Colonic mucosa (tissue), 4 donors: ENCODE measurements at regions of chr9 and their contacts with region 1.

Region 1: DNA sequence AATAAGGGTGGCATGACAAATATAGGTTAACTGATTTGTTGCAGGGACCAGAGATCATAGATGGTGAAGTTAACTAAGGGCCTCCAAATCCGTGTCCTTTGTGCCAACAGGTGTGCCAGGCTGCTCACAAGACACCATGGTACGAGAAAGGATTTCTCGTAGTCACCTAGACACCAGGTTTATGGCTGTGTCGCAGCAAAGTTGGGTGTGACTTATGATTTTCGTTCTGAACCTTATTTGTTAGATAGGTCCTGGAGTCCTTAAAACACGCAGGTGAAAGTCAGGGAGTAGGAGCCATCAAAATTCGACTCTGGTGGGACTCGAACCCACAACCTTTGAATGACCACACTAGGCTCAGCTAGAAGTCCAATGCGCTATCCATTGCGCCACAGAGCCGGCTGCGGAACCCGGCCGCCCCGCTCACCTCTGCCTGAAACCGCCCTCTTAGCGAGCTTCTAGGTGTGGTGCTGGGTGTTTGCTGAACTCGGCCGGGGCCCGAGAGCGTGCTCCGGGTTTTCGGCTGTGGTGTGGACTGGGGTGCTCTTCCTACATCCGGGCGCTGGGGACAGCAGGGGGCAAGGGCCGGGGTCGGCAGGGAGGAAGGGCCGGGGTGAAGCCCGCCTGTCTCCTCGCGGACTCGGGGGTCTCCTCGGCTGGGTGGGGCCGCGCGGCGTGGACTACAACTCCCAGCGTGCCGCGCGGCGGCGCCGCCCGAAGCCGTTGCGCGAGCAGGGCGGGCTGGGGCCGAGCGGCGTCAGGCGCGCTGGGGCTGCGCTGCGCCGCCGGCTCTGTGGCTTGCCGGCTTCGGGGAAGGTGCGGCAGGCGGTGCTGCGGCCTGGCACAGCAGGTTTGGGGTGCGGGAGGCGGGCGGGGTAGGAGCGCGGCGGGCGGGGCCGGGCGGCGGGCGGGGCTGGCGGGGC is at the start of gene SLC27A4:
- DNase-seq: peak; percentile 86
- H3K4me3 ChIP-seq: peak within 1 kb of the TSS; percentile 98
- H3K27ac ChIP-seq: peak within 1 kb of the TSS; percentile 87
- H3K4me1 ChIP-seq: no peaks in the 10 kb centered on the region
- H3K27me3 ChIP-seq: no peaks in the 10 kb centered on the region
- CTCF ChIP-seq: no peak
- total RNA-seq, gene SLC27A4: 26.8 to 68.3 TPM

Region 2: DNA sequence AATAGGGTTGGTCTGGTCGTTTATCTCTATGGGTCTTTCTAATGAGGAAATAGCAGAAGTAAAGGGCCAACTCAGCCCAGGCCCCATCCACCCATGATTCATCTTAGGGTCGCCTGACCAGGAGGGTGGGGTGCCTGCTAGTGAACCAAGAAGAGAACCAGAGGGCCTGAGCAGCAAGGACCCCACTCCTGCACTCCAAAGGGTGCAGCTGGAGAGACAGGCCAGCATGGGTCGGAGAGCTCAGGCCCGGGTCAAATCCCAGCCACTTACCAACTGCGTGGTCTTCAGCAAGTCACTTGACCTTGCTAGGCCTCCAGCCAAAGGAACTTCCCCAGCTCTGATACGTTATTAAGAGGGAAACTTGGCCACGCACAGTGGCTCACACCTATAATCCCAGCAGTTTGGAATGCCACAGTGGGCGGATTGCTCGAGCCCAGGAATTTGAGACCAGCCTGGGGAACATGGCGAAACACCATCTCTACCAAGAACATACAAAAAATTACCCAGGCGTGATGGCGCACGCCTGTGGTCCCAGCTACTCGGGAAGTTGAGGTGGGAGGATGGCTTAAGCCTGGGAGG is 175.6 kb before region 1 on chr9:
- intact Hi-C with region 1: no loop called
- DNase-seq: no peak
- H3K4me3 ChIP-seq: no peak overlapping the region
- H3K27ac ChIP-seq: no peak overlapping the region
- H3K4me1 ChIP-seq: no peaks in the 10 kb centered on the region
- H3K27me3 ChIP-seq: no peaks in the 10 kb centered on the region
- CTCF ChIP-seq: no peak

Region 3: GRCh38 chr9:128182893-128183588 is 157.0 kb before region 1 on chr9:
- intact Hi-C with region 1: loop called (anchors 10 kb)
- DNase-seq: no peak
- H3K4me3 ChIP-seq: no peak overlapping the region
- H3K27ac ChIP-seq: no peak overlapping the region
- H3K4me1 ChIP-seq: no peaks in the 10 kb centered on the region
- H3K27me3 ChIP-seq: no peaks in the 10 kb centered on the region
- CTCF ChIP-seq: no peak

Region 4: GRCh38 chr9:128296337-128297220 is 43.5 kb before region 1 on chr9:
- intact Hi-C with region 1: loop called (anchors 5 kb)
- DNase-seq: peak; percentile 45
- H3K4me3 ChIP-seq: no peak overlapping the region
- H3K27ac ChIP-seq: peak overlapping the region; percentile 61
- H3K4me1 ChIP-seq: peaks cover 8% of the 10 kb centered on the region
- H3K27me3 ChIP-seq: no peaks in the 10 kb centered on the region
- CTCF ChIP-seq: no peak

Region 5: DNA sequence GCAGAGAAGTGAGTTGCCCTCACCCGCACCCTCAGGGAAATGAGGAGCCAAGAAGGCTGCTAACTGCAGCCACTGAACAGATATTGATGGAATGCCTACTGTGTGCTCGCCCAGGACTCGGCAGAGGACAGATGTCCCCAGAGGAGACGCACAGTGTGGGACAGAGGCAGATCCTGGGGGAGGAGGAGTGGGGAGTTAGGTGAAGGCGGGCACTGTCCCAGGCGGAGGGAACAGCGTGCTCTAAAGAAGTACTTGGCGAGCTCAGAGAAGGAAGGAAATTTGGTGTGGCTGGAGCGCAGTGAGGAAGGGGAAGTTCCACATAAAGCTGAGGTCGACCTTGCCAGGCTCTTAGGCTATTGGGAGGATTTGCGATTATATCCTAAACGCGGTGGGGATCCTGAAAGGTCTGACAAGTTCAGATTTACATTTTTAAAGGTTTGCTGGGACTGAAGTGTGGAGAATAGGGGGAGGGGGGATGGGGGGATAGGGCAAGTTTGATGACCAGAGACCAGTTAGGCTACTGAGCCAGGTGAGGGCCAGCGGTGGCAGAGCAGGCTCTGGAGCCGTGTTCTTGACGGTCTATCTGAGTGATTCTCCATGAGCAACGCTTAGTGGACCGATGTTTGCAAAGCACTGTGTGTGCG is 57.1 kb after region 1 on chr9:
- intact Hi-C with region 1: no loop called
- DNase-seq: no peak
- H3K4me3 ChIP-seq: no peak overlapping the region
- H3K27ac ChIP-seq: no peak overlapping the region
- H3K4me1 ChIP-seq: no peaks in the 10 kb centered on the region
- H3K27me3 ChIP-seq: no peaks in the 10 kb centered on the region
- CTCF ChIP-seq: no peak